Body of pancreas (tissue), 4 donors: ENCODE measurements at regions of chr11 and their contacts with region 1.

Region 1: GRCh38 chr11:3091791-3092602 is 34.8 kb upstream of the CARS1 start:
- DNase-seq: peak; percentile 70 to 81 (median 73)
- ATAC-seq: peak; percentile 67
- H3K4me3 ChIP-seq: no peak overlapping the region
- H3K27ac ChIP-seq: no peak overlapping the region
- H3K4me1 ChIP-seq: peaks cover 8% of the 10 kb centered on the region
- H3K27me3 ChIP-seq: no peaks in the 10 kb centered on the region
- CTCF ChIP-seq: peak; percentile 93 to 99 (median 97)
- POLR2A ChIP-seq: no peak

Region 2: GRCh38 chr11:2930704-2931428 is 161.1 kb before region 1 on chr11:
- intact Hi-C with region 1: no loop called
- DNase-seq: peak; percentile 88 to 94 (median 90)
- ATAC-seq: peak; percentile 82
- H3K4me3 ChIP-seq: no peak overlapping the region
- H3K27ac ChIP-seq: peak overlapping the region; percentile 47 to 77 (median 64)
- H3K4me1 ChIP-seq: peaks cover 33% of the 10 kb centered on the region
- H3K27me3 ChIP-seq: peaks cover 0 to 5% of the 10 kb centered on the region in 2 donors
- CTCF ChIP-seq: peak; percentile 82 to 98 (median 95)
- POLR2A ChIP-seq: peak in 1 of 3 donors; percentile 21

Region 3: DNA sequence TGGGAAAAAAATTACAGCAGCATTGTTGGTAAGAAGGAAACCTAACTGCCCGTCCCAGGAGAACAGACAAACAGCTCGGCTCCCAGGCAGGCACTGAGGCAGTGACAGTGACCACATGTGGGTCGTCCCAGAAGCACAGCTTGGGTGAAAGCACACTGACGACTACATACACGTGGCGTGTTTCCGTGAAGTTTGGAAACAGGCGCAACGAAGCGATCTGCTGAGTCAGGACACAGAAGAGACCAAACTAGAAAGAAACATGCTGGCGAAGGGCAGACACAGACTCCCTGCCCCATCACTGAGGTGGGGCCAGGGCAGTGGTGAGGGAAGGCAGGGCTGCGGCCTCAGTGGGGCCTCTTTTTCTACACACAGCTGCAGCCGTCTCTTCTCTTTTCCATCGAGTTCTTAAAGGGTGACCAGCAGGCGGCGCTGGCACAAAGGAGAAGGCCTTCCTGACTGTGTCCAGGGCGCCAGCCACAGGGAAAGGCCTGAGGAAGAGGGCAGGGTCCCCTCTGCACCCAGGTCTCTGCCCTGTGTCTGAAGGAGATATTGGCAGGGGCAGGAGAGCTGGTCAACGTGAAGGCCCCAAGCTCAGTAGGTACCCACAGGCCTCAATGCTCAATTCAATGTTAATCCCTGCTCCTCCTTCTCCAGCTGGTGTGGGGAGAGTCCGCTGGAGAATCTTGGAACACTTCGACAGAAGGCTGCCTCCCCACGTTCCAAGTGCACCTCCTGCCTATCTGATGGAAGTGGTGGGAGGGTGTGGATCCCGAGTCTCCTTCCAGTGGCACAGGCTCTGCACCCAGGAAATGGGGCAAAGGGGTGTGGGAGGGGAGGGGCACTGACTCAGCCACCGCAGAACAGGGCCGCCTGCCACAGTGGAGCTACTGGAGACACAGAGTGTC is 54.7 kb before region 1 on chr11:
- intact Hi-C with region 1: loop called (anchors 5 kb)
- DNase-seq: peak; percentile 81 to 86 (median 84)
- ATAC-seq: peak; percentile 85
- H3K4me3 ChIP-seq: no peak overlapping the region
- H3K27ac ChIP-seq: no peak overlapping the region
- H3K4me1 ChIP-seq: peaks cover 8% of the 10 kb centered on the region
- H3K27me3 ChIP-seq: no peaks in the 10 kb centered on the region
- CTCF ChIP-seq: peak; percentile 43 to 78 (median 71)
- POLR2A ChIP-seq: no peak